Sigmoid colon (tissue), 7 donors: ENCODE measurements at regions of chr6 and their contacts with region 1.

Region 1: DNA sequence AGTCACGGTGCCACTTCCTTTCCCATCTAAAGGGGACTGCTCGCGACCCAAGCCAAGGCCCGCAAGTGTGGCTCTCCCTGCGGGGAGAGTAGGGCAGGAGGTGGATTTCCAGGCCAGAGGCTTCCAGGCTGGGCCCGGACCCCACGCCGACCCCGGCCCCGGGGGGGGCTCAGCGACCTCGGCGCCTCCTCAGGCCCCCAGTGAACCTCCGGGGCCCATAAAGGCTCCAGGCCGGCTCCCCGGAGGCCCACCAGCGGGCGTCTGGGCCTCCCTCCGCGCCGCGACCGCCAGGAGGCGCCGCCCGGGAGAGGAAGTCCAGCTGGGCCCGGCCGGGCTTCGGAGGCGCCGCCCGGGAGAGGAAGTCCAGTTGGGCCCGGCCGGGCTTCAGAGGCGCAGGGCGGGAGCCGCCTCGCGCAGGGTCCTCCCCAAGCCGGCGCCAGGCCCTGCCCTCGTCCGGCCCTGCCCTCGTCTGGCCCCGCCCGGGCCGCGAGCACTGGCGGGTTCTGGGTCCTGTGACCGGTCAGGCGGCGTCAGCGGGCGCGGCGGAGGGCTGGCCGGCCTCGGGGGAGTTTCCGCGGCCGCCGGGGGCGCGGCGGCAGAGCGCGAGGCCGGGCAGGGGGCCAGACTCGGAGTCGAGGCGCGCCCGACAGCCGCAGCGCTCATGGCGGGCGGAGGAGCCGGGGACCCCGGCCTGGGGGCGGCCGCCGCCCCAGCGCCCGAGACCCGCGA is at the start of gene RAB32:
- DNase-seq: peak; percentile 96
- H3K4me3 ChIP-seq: peak within 1 kb of the TSS; percentile 81 to 92 (median 82)
- H3K27ac ChIP-seq: peak within 1 kb of the TSS; percentile 98 to 100 (median 99)
- H3K4me1 ChIP-seq: peaks cover 0 to 36% (median 27%) of the 10 kb centered on the region in 4 donors
- H3K27me3 ChIP-seq: no peaks in the 10 kb centered on the region
- CTCF ChIP-seq: peak; percentile 10 to 82 (median 34)
- EP300 ChIP-seq: no peak
- POLR2A ChIP-seq: no peak
- total RNA-seq, gene RAB32: 32.1 to 35.3 (median 33.3) TPM

Region 2: DNA sequence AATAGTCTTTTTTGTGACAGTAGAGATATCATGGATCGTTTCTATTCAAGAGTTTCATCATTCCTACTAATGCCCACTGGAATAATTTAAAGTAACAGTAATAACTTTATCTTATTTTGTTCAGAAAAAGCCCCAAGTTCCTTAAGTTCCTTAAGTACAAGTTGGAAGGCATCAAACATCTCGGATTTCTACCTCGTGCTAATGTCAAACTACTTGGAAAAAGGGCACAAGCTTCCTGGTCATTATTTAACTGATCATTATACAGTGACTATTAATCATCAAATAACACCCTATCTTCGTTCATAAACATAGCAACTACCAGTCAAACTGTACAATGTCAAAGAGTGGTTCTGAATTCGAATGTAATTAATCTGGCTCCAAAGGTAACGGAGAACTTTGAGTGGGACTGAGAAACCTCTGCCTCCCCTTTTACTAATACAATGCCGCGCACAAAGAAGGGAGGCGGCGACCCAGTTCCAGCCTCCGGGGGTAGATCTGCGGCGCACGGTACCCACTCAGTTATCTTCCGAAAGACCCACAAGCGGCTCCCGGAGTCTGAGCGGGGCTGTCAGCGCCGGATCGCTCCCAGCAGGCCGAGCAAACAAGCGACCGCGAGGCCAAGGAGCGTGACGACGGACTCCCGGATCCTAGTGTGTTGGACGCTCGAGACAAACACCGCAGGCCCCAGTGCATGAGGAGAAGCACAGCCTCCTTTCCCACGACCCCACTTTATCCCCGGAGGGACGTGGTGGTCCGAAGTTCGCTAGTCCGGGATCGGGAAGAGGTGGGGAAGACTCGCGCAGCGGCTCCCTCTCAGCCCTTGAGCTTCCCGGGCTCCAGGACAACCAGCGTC is 579.9 kb before region 1 on chr6:
- intact Hi-C with region 1: loop called (anchors 5 kb)
- DNase-seq: peak; percentile 76
- H3K4me3 ChIP-seq: peak overlapping the region; percentile 66 to 81 (median 74)
- H3K27ac ChIP-seq: peak overlapping the region; percentile 85 to 92 (median 88)
- H3K4me1 ChIP-seq: peaks cover 0 to 40% (median 34%) of the 10 kb centered on the region in 4 donors
- H3K27me3 ChIP-seq: no peaks in the 10 kb centered on the region
- CTCF ChIP-seq: no peak
- EP300 ChIP-seq: no peak
- POLR2A ChIP-seq: no peak

Region 3: DNA sequence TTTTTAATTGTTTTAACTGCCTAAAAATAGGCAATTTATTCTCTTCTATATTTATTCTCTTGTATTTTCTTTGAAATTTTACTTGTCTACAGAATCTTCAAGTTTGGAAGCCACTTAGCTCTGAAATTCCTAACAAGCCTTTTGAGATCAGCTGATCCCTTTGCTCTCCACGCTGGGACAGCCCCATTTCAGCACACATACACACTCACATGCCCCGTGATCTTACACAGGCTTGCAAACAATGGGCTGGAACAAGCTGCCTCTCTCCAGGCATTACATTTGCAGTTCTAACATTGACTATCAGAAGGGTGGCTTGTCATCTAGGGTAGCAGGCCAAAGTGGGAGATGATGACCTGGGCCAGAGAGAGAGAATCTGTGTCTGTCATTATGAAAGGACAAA is 61.8 kb before region 1 on chr6:
- intact Hi-C with region 1: no loop called
- DNase-seq: no peak
- H3K4me3 ChIP-seq: no peak overlapping the region
- H3K27ac ChIP-seq: no peak overlapping the region
- H3K4me1 ChIP-seq: no peaks in the 10 kb centered on the region
- H3K27me3 ChIP-seq: no peaks in the 10 kb centered on the region
- CTCF ChIP-seq: no peak
- EP300 ChIP-seq: no peak
- POLR2A ChIP-seq: no peak

Region 4: DNA sequence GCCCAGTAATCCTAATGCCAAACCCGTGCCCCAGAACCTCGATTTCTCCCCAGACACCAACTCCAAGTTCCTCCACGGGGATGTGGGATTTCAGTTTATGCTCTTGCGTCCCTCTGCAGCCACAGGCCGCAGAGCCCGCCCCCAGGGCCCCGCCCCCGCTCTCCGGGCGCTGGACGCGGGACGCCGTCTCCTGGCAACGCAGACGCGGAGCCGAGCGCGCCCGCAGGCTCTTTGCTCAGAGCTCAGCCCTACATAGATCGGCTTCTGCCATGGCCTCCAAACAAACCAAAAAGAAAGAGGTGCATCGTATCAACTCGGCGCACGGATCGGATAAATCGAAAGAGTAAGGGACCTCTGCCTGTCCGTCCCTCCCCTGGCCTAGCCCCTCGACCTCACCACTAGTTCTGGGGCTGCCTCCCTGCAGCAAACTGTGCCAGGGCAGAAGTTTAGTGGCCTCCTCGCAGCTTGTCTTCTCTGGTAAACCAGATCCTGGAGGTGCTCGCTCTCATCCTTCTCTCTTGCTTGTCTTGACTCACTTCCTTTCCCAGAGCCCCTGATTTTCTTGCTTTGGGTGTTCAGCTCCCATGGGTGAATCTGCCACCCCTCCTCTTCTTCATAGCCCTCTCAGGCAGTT is 55.5 kb after region 1 on chr6 and contains the start of gene ADGB:
- intact Hi-C with region 1: no loop called
- DNase-seq: no peak
- H3K4me3 ChIP-seq: peak within 1 kb of the TSS in 3 of 4 donors; percentile 35 to 45 (median 36)
- H3K27ac ChIP-seq: no peak within 1 kb of the TSS
- H3K4me1 ChIP-seq: peaks cover 0 to 7% (median 5%) of the 10 kb centered on the region in 4 donors
- H3K27me3 ChIP-seq: no peaks in the 10 kb centered on the region
- CTCF ChIP-seq: no peak
- EP300 ChIP-seq: no peak
- POLR2A ChIP-seq: no peak
- total RNA-seq, gene ADGB: 0.55 TPM in 1 of 4 donors, not detected in the others

Region 5: DNA sequence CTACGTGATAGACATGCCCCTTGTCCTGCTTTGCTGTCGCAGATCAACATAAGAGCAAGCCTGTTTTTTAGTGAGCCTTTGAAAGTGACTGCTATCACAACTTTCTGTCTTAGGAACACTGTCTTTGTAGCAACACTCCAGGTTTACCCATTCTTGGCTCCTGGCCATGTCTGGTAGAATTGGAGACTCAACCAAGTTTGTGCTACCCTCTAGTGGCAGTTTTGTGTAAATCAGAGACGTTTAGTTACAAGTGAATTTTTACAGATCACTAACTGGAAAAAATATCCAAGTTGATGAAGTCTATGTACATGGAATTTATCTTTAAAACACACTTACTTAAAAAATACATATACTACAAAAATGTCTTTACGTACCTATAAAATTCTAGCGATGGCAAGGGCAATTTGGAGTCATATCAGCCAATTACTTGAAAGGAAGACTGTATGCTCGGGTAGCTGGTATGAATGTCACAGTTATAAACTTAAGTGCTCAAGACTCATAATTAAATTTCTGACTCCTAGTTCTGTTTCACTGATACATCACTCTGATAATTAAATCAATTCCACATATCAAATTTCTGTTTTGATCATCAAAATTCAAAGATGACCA is 156.8 kb after region 1 on chr6:
- intact Hi-C with region 1: loop called (anchors 2 kb)
- DNase-seq: peak; percentile 89
- H3K4me3 ChIP-seq: no peak overlapping the region
- H3K27ac ChIP-seq: no peak overlapping the region
- H3K4me1 ChIP-seq: no peaks in the 10 kb centered on the region
- H3K27me3 ChIP-seq: no peaks in the 10 kb centered on the region
- CTCF ChIP-seq: peak; percentile 36 to 77 (median 60)
- EP300 ChIP-seq: no peak
- POLR2A ChIP-seq: no peak

Region 6: GRCh38 chr6:147506704-147507114 is 963.3 kb after region 1 on chr6:
- intact Hi-C with region 1: no loop called
- DNase-seq: peak; percentile 76
- H3K4me3 ChIP-seq: peak overlapping the region; percentile 38 to 58 (median 56)
- H3K27ac ChIP-seq: no peak overlapping the region
- H3K4me1 ChIP-seq: peaks cover 0 to 30% (median 23%) of the 10 kb centered on the region in 4 donors
- H3K27me3 ChIP-seq: peaks cover 0 to 19% (median 0%) of the 10 kb centered on the region in 3 donors
- CTCF ChIP-seq: peak; percentile 59 to 84 (median 78)
- EP300 ChIP-seq: no peak
- POLR2A ChIP-seq: no peak